Aorta (tissue), 5 donors: ENCODE measurements at regions of chr17 and their contacts with region 1.

Region 1: GRCh38 chr17:79728226-79728907 is 2.4 kb upstream of the ENPP7 start:
- DNase-seq: peak; percentile 87
- ATAC-seq: peak; percentile 81
- H3K4me3 ChIP-seq: peak overlapping the region; percentile 5 to 29
- H3K27ac ChIP-seq: no peak overlapping the region
- H3K4me1 ChIP-seq: no peaks in the 10 kb centered on the region
- H3K27me3 ChIP-seq: no peaks in the 10 kb centered on the region

Region 2: DNA sequence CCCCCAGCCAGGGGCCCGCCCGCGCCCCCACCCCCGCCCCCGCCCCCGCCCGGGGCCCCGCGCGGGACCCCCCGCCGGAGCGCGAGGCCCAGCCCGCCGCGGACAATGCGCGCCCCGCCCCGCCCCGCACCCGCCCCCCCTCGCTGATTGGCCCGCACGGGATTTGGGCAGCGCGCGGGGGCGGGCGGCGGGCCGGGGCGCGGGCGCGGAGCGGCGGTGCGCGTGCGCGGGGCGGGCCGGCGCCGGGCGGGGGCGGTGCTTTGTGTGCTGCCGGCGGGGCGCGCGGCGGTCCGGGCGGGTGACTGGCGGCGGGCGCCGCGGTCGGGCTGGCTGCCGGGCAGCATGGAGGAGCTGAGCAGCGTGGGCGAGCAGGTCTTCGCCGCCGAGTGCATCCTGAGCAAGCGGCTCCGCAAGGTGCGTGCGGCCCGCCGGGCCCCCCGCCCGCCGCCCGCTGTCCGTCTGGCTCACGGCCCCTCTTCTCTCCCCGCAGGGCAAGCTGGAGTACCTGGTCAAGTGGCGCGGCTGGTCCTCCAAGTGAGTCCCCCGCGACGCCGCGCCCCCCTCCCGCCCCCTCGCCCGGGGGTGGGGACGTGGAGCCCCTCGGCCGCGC is 49.6 kb after region 1 on chr17 and contains the start of gene CBX2:
- intact Hi-C with region 1: loop called in 1 of 2 experiments (anchors 5 kb)
- DNase-seq: peak; percentile 84 to 94
- ATAC-seq: peak; percentile 65
- H3K4me3 ChIP-seq: peak within 1 kb of the TSS; percentile 37 to 41
- H3K27ac ChIP-seq: no peak within 1 kb of the TSS
- H3K4me1 ChIP-seq: no peaks in the 10 kb centered on the region
- H3K27me3 ChIP-seq: peaks cover 0 to 2% of the 10 kb centered on the region in 2 donors
- total RNA-seq, gene CBX2: 1.2 to 4.5 TPM